Aorta (tissue), 5 donors: ENCODE measurements at regions of chr7 and their contacts with region 1.

Region 1: DNA sequence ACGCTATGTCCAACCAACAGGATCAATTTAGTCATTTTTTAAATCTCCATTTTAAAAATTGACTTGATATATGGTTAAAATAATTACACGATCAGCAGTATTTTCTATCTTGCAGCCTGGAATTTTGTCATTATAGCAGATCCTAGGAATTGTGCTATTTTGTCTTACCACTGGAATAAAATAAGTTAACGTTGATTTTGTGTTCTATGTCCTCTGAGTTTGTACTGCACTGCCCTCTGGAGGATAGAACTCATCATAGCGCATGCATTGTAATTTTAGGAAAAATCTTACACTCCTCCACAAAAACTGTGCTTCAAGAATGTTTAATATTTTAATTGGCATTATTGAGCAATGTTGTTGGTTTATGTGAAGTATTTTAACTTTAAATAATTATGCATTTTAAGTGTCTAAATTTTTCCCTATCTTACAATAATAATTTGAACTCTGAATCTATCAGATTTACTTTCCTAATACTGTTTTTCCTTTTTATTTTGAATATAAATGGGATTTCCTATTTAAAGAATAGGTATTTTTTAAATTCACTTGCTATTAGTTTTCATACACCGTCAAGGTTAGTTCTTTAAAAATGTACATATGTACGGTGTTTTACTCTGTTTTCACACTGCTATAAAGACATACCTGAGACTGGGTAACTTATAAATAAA is 220.1 kb downstream of the PPP1R3A start:
- DNase-seq: no peak
- ATAC-seq: no peak
- H3K4me3 ChIP-seq: no peak overlapping the region
- H3K27ac ChIP-seq: no peak overlapping the region
- H3K4me1 ChIP-seq: no peaks in the 10 kb centered on the region
- H3K27me3 ChIP-seq: no peaks in the 10 kb centered on the region

Region 2: DNA sequence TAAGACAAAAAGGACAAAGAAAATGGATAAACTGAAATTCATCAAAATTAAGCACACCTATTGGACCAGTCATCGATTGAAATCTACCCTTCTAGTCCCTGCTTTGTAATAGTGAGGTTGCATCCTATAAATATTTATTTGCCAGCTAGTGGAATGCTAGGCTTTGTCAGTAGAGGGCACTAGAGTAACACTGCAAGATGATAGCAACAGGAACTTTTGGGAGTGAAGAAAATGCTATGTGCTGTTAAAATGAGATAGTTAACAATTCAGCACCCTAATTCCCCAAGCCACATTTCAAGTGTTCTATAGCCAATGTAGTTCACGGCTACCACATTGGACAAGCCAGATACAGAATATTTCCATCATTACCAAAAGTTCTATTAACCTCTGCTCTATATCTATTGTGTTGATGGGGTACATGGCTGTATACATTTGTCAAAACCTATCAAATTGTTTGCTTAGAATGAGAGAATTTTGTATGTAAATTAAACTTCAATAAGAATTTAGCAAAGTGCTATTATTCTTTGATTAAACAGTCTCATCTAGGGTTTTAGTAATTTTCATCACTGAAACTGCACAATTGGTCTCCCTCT is 1148.1 kb before region 1 on chr7:
- intact Hi-C with region 1: loop called in 1 of 2 experiments (anchors 10 kb)
- DNase-seq: no peak
- ATAC-seq: no peak
- H3K4me3 ChIP-seq: no peak overlapping the region
- H3K27ac ChIP-seq: no peak overlapping the region
- H3K4me1 ChIP-seq: no peaks in the 10 kb centered on the region
- H3K27me3 ChIP-seq: no peaks in the 10 kb centered on the region

Region 3: DNA sequence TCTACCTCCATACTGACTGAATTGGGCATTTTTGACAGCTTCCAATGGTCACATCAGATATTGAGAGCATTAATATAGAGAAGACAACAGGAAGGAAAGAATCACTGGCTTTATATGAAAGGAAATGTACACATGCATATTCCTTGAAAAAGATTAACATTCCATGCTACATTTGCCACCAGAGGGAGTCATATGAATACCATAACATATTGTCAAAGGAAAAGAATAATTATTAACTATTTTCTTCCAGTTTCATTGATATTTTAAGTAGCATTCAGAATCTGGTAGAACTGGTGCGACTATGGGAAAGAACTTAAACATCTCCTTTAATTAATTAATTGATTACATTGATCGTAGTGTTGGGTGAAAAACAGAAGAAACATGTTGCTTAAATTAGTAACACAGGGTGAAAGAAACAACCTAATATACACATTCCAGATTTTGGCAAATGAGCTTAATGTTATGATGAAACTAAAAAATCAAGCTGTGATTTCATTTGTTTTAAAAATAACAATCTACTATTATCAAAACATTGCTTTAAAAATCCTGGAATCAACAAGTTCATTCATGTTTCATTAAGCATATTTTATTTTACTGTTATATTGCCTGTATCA is 683.5 kb before region 1 on chr7:
- intact Hi-C with region 1: loop called (anchors 5 kb)
- DNase-seq: no peak
- ATAC-seq: no peak
- H3K4me3 ChIP-seq: no peak overlapping the region
- H3K27ac ChIP-seq: no peak overlapping the region
- H3K4me1 ChIP-seq: no peaks in the 10 kb centered on the region
- H3K27me3 ChIP-seq: no peaks in the 10 kb centered on the region

Region 4: DNA sequence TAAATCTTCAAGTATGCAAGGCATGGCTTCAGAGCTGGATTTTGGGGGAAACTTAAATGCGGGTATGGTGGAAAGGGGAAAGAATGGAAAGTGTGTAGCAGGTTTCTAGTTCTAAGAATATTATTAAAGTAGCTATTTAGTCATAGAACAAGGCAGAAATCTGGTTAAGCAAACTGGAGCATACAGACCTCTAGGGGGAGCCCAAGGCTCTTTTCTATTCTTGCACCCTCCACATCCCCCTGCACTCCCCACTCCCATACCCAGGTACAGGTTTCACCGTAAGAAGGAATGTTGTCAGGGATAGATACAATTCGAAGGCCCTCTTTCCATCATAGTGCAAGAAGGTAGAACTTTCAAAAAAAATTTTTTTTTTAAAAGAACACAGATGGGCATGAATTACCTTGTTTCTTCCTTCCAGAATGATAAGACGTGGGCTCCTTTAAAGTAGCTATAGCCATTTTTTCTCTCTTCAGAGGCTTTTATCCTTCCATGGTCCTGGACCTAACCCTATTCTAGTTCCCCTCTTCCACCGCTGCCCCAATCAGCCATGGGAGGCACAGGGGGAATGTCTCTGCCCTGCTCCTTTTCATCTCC is 538.8 kb before region 1 on chr7:
- intact Hi-C with region 1: loop called in 1 of 2 experiments (anchors 10 kb)
- DNase-seq: no peak
- ATAC-seq: no peak
- H3K4me3 ChIP-seq: no peak overlapping the region
- H3K27ac ChIP-seq: no peak overlapping the region
- H3K4me1 ChIP-seq: no peaks in the 10 kb centered on the region
- H3K27me3 ChIP-seq: no peaks in the 10 kb centered on the region

Region 5: GRCh38 chr7:113856010-113856409 is 157.3 kb after region 1 on chr7:
- intact Hi-C with region 1: no loop called
- DNase-seq: no peak
- ATAC-seq: no peak
- H3K4me3 ChIP-seq: no peak overlapping the region
- H3K27ac ChIP-seq: no peak overlapping the region
- H3K4me1 ChIP-seq: no peaks in the 10 kb centered on the region
- H3K27me3 ChIP-seq: no peaks in the 10 kb centered on the region